Natural killer cell (primary cell): ENCODE measurements at regions of chr22 and their contacts with region 1.

Region 1: DNA sequence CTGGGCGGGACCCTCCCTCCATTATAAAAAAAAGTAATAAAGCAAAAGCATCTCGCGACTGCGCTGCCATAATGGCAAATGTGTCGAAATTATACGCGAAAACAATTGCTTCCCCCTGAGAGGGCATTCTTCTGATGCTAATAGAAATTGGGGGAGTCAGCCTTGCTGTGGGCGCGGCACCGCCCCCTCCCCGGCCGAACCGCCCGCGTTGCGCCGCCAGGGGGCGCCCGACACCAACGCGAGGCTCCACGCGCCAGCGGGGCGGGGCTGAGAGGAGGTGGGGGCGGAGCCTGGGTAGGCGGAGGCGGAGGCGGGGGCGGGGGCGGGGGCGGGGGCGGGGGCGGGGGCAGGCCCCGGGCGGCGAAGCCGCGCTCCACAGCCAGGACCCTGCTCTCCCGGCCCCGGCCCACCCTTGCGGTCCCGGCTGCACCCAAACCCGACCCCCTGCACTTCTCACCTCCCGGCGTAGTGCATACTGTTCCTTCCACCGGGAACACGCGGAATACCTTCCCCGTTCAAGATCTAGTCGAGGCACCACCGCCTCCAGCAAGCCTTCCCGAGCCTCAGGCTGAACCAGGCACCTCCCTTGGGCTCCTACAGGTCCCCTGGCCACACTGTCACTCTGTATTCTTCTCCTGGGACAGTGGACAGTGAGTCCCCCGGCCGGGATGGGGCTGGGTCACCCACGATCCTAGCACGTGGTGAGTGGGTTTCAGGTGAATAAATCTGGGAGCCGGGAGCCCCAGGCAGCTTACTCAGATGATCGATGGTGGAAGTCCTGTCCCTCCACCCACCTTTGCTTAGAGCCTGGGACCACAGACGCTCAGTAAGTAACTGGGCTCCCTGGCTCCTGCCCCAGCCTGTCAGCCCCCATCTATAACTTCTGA is 15.5 kb upstream of the UPK3A start:
- DNase-seq: peak; percentile 94 to 96
- ATAC-seq: peak; percentile 99 to 100 (median 99)
- H3K4me3 ChIP-seq: peak overlapping the region; percentile 53
- H3K4me3 Mint-ChIP-seq: peak overlapping the region; percentile 79
- H3K27ac ChIP-seq: no peak overlapping the region
- H3K27ac Mint-ChIP-seq: peak overlapping the region in 1 of 2 donors; percentile 70
- H3K4me1 ChIP-seq: peaks cover 18% of the 10 kb centered on the region
- H3K4me1 Mint-ChIP-seq: peaks cover 5 to 10% of the 10 kb centered on the region in 2 donors
- H3K27me3 ChIP-seq: peaks cover 15% of the 10 kb centered on the region
- H3K27me3 Mint-ChIP-seq: peaks cover 18 to 34% of the 10 kb centered on the region in 2 donors
- CTCF ChIP-seq: peak; percentile 81

Region 2: DNA sequence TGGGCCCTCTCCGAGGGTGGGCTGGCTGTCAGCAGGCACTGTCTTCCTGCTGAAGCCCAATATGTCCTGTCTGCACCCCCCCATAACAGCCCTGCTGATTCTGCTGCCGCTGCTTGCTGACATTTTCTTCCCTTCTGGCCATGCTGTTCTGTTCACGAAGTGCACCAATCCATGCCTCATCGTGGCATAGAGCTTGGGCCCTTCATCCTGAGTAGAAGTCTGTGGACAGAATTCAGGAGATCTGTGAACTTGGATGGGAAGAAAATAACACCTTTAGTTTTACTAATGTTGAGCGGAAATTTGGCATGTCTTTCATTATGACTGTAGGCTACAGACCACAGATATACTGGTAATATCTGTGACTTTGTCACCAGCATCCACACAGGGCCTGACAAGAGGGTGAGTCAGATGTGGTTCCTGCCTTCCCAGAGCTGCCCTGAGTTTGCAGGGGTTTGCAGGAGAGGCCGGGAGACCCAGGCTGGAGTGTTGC is 14.4 kb before region 1 on chr22:
- intact Hi-C with region 1: no loop called
- DNase-seq: peak in 1 of 2 donors; percentile 39
- ATAC-seq: peak in 2 of 3 donors; percentile 21 to 64
- H3K4me3 ChIP-seq: no peak overlapping the region
- H3K4me3 Mint-ChIP-seq: no peak overlapping the region
- H3K27ac ChIP-seq: peak overlapping the region; percentile 51
- H3K27ac Mint-ChIP-seq: no peak overlapping the region
- H3K4me1 ChIP-seq: peaks cover 10% of the 10 kb centered on the region
- H3K4me1 Mint-ChIP-seq: no peaks in the 10 kb centered on the region
- H3K27me3 ChIP-seq: no peaks in the 10 kb centered on the region
- H3K27me3 Mint-ChIP-seq: peaks cover 0 to 2% of the 10 kb centered on the region in 2 donors
- CTCF ChIP-seq: no peak

Region 3: DNA sequence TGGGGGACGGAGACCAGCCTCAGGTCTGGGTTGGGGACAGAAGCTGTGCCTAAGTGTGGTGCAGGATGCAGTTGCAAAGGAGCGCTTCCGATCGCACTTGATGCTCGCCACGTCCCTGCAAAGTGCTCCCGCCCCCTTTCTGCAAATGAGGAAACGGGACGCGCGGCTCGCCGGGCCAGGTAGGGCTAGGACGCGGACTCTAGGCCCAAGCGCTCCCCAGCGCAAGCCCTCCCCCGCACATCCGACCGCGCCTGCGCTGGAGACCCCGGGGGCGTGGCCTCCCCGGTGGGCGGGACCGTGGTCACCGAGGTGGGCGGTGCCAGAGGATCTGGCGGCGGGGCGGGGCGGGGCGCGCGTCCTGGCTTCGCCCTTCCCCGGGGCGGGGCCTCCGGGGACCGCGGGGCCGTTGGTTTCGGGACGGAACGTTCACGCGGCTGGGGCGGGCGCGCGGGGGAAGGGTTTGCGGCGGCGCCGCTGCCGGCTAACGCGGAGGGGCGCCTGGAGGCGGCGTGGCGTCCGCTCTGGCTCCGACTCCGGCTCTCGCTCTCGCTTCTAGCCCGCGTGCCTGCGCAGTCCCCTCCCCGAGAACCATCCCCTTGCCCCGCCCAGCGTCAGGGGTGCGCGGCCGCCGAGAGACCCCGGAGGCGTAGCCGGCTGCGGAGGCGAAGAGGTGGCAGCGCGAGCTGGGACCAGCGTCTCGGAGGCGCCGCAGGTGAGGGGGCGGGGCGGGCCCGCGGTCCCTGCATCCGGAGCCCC is 40.4 kb after region 1 on chr22 and contains the start of gene FAM118A:
- intact Hi-C with region 1: loop called (anchors 2 kb)
- DNase-seq: peak; percentile 96 to 100
- ATAC-seq: peak; percentile 89 to 96 (median 92)
- H3K4me3 ChIP-seq: peak within 1 kb of the TSS; percentile 64
- H3K4me3 Mint-ChIP-seq: peak within 1 kb of the TSS; percentile 86
- H3K27ac ChIP-seq: peak within 1 kb of the TSS; percentile 73
- H3K27ac Mint-ChIP-seq: peak within 1 kb of the TSS; percentile 82 to 89
- H3K4me1 ChIP-seq: peaks cover 28% of the 10 kb centered on the region
- H3K4me1 Mint-ChIP-seq: peaks cover 23 to 28% of the 10 kb centered on the region in 2 donors
- H3K27me3 ChIP-seq: no peaks in the 10 kb centered on the region
- H3K27me3 Mint-ChIP-seq: no peaks in the 10 kb centered on the region
- CTCF ChIP-seq: no peak
- total RNA-seq, gene FAM118A: 42.0 to 67.2 (median 62.6) TPM

Region 4: GRCh38 chr22:45435544-45436139 is 166.4 kb after region 1 on chr22:
- intact Hi-C with region 1: loop called (anchors 1 kb)
- DNase-seq: peak; percentile 75 to 91
- ATAC-seq: peak; percentile 84 to 96 (median 96)
- H3K4me3 ChIP-seq: no peak overlapping the region
- H3K4me3 Mint-ChIP-seq: no peak overlapping the region
- H3K27ac ChIP-seq: no peak overlapping the region
- H3K27ac Mint-ChIP-seq: no peak overlapping the region
- H3K4me1 ChIP-seq: peaks cover 8% of the 10 kb centered on the region
- H3K4me1 Mint-ChIP-seq: peaks cover 0 to 9% of the 10 kb centered on the region in 2 donors
- H3K27me3 ChIP-seq: no peaks in the 10 kb centered on the region
- H3K27me3 Mint-ChIP-seq: peaks cover 3% of the 10 kb centered on the region in 2 donors
- CTCF ChIP-seq: peak; percentile 99

Region 5: DNA sequence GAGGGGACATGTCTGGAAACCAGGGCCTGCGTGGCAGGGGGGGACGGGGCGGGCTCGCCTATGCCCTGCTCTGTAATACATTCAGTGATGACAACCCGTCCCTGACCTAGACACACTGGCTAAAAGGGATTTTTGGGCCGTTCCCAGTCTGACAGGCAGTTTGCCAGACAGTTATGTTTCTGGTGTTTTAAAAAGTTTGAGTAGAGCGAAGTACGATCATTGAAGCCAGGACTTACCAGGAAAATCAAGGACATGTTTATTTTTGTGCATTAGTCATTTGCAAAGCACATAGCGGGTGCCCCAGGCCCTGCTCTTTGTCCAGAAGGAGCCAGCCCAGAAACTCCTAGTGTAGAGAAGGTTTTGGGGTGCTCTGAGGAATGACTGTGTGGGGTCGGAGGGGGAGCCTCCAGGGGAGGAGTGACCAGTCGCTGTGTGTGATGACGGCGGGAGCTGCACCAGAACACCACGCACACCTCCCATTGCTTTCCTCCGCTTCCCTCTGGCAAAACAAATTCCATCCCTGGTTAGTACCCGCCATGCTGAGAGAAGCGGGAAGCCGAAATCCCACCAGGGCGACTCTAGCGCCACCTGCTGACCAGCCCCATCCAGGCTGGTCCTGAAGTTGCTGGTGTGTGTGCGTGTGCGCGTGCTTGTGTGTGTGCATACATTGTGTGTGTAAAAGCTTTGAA is 284.3 kb after region 1 on chr22:
- intact Hi-C with region 1: loop called (anchors 5 kb)
- DNase-seq: peak; percentile 35 to 60
- ATAC-seq: peak; percentile 36 to 61 (median 54)
- H3K4me3 ChIP-seq: no peak overlapping the region
- H3K4me3 Mint-ChIP-seq: no peak overlapping the region
- H3K27ac ChIP-seq: no peak overlapping the region
- H3K27ac Mint-ChIP-seq: no peak overlapping the region
- H3K4me1 ChIP-seq: no peaks in the 10 kb centered on the region
- H3K4me1 Mint-ChIP-seq: no peaks in the 10 kb centered on the region
- H3K27me3 ChIP-seq: no peaks in the 10 kb centered on the region
- H3K27me3 Mint-ChIP-seq: peaks cover 6 to 17% of the 10 kb centered on the region in 2 donors
- CTCF ChIP-seq: peak; percentile 53